ENCODE measurements at regions of chr5 and their contacts with region 1.

Region 1: GRCh38 chr5:179986328-179986727 is 78.6 kb upstream of the TBC1D9B start:
- DNase-seq: no peak
- H3K4me3 ChIP-seq: no peak overlapping the region
- H3K27ac ChIP-seq: no peak overlapping the region
- H3K4me1 ChIP-seq: no peaks in the 10 kb centered on the region
- H3K27me3 ChIP-seq: no peaks in the 10 kb centered on the region
- CTCF ChIP-seq: peak; percentile 43

Region 2: GRCh38 chr5:180071531-180072255 is 85.4 kb after region 1 on chr5 and contains the start of gene RNF130:
- intact Hi-C with region 1: loop called (anchors 10 kb)
- DNase-seq: peak; percentile 93
- H3K4me3 ChIP-seq: peak within 1 kb of the TSS; percentile 98
- H3K27ac ChIP-seq: peak within 1 kb of the TSS; percentile 99
- H3K4me1 ChIP-seq: peaks cover 42% of the 10 kb centered on the region
- H3K27me3 ChIP-seq: no peaks in the 10 kb centered on the region
- CTCF ChIP-seq: no peak
- total RNA-seq, gene RNF130: 45.9 TPM

Measured in left ventricle myocardium inferior (tissue), 1 donor.